Activated B cell treated with CpG ODN at 0.5 μM for 24 hours (primary cell): ENCODE measurements at regions of chr9 and their contacts with region 1.

Region 1: GRCh38 chr9:91164724-91165520 is 196.8 kb downstream of the AUH start:
- DNase-seq: no peak
- ATAC-seq: peak; percentile 59
- H3K4me3 Mint-ChIP-seq: no peak overlapping the region
- H3K27ac Mint-ChIP-seq: no peak overlapping the region
- H3K4me1 Mint-ChIP-seq: peaks cover 37% of the 10 kb centered on the region
- H3K27me3 Mint-ChIP-seq: no peaks in the 10 kb centered on the region
- CTCF ChIP-seq: no peak

Region 2: DNA sequence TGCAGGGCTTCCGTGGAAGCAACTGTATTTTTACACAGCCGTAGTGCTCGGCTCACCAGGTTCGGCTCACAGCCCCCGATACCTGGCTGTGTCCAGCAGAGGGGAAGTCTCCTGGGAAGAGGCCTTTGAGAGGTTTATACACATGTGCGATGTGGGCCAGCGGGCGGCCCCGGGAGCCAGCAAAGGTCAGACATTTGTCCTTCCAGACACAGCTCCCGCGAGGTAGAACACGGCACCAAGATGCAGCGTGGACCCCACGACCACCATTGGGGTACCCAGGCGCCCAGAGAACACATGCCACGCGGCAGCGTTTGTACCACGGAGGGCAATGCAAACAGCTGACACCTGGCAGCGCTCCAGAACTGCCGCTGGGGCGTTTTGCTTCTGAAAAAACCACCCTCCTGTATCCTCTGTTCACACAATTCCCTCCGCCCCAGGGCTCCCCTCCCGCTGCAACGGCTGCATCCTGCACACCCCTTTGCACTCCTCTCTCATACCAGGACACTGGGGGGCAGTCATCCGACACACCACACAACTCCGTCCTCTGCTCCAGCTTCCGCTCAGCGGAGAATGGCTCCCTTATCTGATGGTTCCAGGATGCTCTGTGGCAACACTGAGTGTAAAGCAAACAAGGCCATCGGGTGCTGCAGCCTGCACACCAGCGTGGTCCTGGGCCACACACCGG is 128.0 kb before region 1 on chr9:
- CTCF ChIA-PET with region 1: no interaction called
- POLR2A ChIA-PET with region 1: no interaction called
- intact Hi-C with region 1: loop called (anchors 5 kb)
- DNase-seq: no peak
- ATAC-seq: peak; percentile 34
- H3K4me3 Mint-ChIP-seq: peak overlapping the region; percentile 55
- H3K27ac Mint-ChIP-seq: no peak overlapping the region
- H3K4me1 Mint-ChIP-seq: peaks cover 31% of the 10 kb centered on the region
- H3K27me3 Mint-ChIP-seq: peaks cover 12% of the 10 kb centered on the region
- CTCF ChIP-seq: no peak

Region 3: DNA sequence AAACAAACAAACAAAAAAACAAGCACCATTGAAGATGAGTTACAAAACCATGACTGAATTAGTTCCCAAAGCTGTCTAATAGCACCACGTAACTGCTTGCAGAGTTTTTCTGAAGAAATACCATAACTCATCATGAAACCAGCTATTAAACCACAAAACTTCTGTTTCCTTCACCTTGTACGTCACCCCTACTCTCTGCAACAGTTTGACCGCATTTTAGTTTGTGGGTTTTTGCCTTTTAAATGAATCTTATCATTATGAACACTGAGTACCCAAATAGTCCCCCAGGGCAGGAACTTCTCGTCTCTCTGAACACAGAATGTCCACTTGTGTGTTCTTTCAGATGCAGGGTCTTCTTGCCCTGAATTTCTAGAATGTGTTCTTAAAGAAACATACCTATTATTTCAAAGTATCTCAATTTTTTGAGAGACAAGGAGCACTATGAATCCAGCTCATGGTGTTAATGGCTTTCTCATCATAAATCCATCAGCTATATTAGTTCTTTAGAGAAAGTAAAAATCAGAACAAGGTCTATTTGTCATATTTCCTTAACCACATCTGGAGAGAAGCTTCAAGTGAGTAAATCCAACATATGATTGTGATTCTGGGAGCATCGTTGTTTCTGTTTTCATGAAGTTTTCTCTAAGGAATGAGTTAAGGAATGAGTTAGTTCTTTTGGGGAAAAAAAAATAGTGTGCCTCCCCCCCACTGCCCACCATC is 13.8 kb before region 1 on chr9:
- CTCF ChIA-PET with region 1: interaction called, 3 read pairs
- POLR2A ChIA-PET with region 1: interaction called, 12 read pairs
- intact Hi-C with region 1: loop called (anchors 1 kb)
- DNase-seq: no peak
- ATAC-seq: peak; percentile 77
- H3K4me3 Mint-ChIP-seq: peak overlapping the region; percentile 30
- H3K27ac Mint-ChIP-seq: peak overlapping the region; percentile 62
- H3K4me1 Mint-ChIP-seq: peaks cover 50% of the 10 kb centered on the region
- H3K27me3 Mint-ChIP-seq: no peaks in the 10 kb centered on the region
- CTCF ChIP-seq: no peak

Region 4: DNA sequence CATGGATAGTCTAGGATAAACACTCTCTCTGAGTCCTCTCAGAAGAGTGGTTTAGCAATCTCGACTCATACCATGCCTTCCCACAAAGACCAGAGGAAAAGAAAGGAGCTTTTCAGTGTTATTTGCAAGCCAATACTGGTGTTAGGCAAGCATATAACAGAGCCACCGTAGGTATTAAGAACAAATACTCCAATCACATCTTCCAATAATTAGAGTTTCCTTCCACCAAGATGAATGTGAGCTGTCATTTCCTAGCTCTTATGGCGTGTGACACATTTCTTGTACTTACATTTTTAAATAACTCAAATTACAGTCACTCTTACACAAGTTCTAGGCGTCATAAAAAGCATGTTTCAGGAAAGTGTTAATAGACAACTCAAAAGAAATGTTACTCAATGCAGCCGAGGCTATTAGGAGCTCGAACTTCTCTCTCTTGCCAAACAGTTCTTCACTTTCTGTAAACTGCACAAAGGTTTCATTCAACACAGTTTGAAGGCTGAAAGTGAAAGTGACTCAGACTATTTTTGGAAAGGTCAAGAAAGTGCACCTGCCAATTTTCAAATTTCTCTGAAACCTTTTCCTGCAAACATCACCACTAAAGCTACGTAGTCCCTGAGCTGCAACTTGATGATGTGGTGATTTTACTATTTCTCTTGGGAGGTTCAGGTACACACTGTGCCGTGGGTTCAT is 43.0 kb after region 1 on chr9:
- CTCF ChIA-PET with region 1: no interaction called
- POLR2A ChIA-PET with region 1: interaction called, 4 read pairs
- intact Hi-C with region 1: loop called (anchors 1 kb)
- DNase-seq: no peak
- ATAC-seq: peak; percentile 89
- H3K4me3 Mint-ChIP-seq: peak overlapping the region; percentile 47
- H3K27ac Mint-ChIP-seq: peak overlapping the region; percentile 83
- H3K4me1 Mint-ChIP-seq: peaks cover 36% of the 10 kb centered on the region
- H3K27me3 Mint-ChIP-seq: no peaks in the 10 kb centered on the region
- CTCF ChIP-seq: no peak

Region 5: GRCh38 chr9:91361291-91362050 is 196.5 kb after region 1 on chr9 and contains the start of gene AUH:
- CTCF ChIA-PET with region 1: no interaction called
- POLR2A ChIA-PET with region 1: no interaction called
- intact Hi-C with region 1: loop called (anchors 1 kb)
- DNase-seq: peak; percentile 89
- ATAC-seq: peak; percentile 97
- H3K4me3 Mint-ChIP-seq: peak within 1 kb of the TSS; percentile 94
- H3K27ac Mint-ChIP-seq: peak within 1 kb of the TSS; percentile 89
- H3K4me1 Mint-ChIP-seq: peaks cover 34% of the 10 kb centered on the region
- H3K27me3 Mint-ChIP-seq: no peaks in the 10 kb centered on the region
- CTCF ChIP-seq: no peak
- total RNA-seq, gene AUH: 11.1 and 14.0 TPM in 2 replicates